Mammary epithelial cell (primary cell): ENCODE measurements at regions of chr17 and their contacts with region 1.

Region 1: GRCh38 chr17:65886315-65887245 is 305.4 kb downstream of the CEP112 start:
- DNase-seq: no peak
- H3K4me3 ChIP-seq: no peak overlapping the region
- H3K27ac ChIP-seq: no peak overlapping the region
- H3K4me1 ChIP-seq: no peaks in the 10 kb centered on the region
- H3K27me3 ChIP-seq: no peaks in the 10 kb centered on the region
- CTCF ChIP-seq: no peak

Region 2: DNA sequence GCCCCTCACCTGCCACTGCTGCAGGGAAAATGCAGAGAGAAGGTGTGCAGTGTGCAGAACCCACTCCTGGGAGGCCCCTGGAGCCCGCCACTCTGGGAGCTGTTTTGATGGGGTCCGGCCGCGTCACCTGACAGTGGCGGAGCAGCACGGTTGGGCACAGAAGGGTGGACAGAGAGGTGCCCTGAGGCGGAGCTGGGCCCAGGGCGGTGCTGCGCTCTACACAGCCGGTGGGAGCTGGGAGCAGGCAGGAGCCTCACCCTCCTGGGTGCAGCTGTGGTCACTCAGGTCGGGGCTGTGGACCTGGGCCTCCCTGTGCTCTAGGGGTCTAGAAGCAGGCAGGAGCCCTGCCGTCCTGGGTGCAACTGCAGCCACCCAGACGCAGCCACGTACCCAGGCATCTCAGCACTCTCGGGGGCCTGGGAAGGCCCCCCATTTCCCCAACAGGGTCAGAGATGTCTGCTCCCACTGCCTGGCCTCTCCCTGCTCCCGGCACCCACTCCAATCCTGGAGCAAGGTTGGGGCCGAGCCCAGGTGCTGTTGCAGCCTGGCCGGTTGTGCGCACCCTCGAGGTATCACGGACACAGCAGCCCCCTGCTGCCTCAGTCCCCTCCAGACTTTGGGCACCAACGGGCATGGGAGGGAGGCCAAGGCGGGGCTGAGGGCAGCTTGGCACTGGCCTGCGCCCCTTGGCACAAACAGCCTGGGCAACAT is 20.7 kb before region 1 on chr17:
- CTCF ChIA-PET with region 1: no interaction called
- dilution Hi-C with region 1: no loop called
- in situ Hi-C with region 1: no loop called
- intact Hi-C with region 1: loop called (anchors 1 kb)
- DNase-seq: no peak
- H3K4me3 ChIP-seq: no peak overlapping the region
- H3K27ac ChIP-seq: no peak overlapping the region
- H3K4me1 ChIP-seq: no peaks in the 10 kb centered on the region
- H3K27me3 ChIP-seq: no peaks in the 10 kb centered on the region
- CTCF ChIP-seq: no peak

Region 3: DNA sequence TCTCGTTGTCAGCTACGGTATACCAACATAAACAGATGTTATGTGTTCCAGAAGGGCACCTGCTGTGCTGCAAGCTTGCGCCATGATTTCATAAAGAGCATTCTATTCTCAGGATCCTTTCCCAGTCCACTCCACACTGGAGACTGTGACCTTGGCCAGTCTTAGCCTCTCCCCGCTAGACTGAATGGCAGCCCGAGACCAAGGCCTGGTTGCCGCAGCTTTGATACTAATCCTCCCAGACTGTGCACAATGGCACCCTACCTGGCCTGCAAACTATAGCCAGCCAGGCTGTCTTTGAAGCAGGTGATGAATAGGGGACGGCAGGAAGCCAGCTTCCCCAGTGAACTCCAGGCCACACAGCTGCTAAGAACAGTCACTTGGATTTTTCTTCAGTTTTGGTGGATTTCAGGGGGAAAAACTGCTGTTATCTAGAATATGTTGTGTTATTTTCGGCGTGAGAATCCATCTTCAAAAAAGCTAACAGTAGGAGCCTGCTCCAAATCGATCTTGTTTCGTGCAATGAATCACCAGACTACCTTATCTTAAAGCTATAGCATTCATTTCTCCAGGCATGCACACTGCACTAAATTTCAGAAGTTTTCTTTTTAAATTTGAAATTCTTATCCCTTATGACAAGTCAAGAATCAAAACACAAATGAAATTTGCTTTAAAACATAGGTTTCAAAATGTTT is 16.4 kb after region 1 on chr17:
- CTCF ChIA-PET with region 1: no interaction called
- dilution Hi-C with region 1: no loop called
- in situ Hi-C with region 1: no loop called
- intact Hi-C with region 1: no loop called
- DNase-seq: no peak
- H3K4me3 ChIP-seq: no peak overlapping the region
- H3K27ac ChIP-seq: no peak overlapping the region
- H3K4me1 ChIP-seq: no peaks in the 10 kb centered on the region
- H3K27me3 ChIP-seq: no peaks in the 10 kb centered on the region
- CTCF ChIP-seq: no peak

Region 4: GRCh38 chr17:66248285-66248684 is 361.7 kb after region 1 on chr17:
- CTCF ChIA-PET with region 1: interaction called, 17 read pairs
- dilution Hi-C with region 1: no loop called
- in situ Hi-C with region 1: no loop called
- intact Hi-C with region 1: no loop called
- DNase-seq: no peak
- H3K4me3 ChIP-seq: no peak overlapping the region
- H3K27ac ChIP-seq: no peak overlapping the region
- H3K4me1 ChIP-seq: peaks cover 9% of the 10 kb centered on the region
- H3K27me3 ChIP-seq: no peaks in the 10 kb centered on the region
- CTCF ChIP-seq: no peak